ENCODE measurements at regions of chrX and their contacts with region 1.

Region 1: GRCh38 chrX:71301195-71301924 is at the start of gene ITGB1BP2:
- DNase-seq: no peak
- H3K4me3 ChIP-seq: no peak within 1 kb of the TSS
- H3K27ac ChIP-seq: no peak within 1 kb of the TSS
- H3K4me1 ChIP-seq: no peaks in the 10 kb centered on the region
- H3K27me3 ChIP-seq: no peaks in the 10 kb centered on the region
- CTCF ChIP-seq: no peak
- total RNA-seq, gene ITGB1BP2: 5.2 and 5.4 TPM in 2 replicates

Region 2: GRCh38 chrX:70313503-70313902 is 987.9 kb before region 1 on chrX:
- CTCF ChIA-PET with region 1: no interaction called
- POLR2A ChIA-PET with region 1: interaction called, 12 read pairs
- intact Hi-C with region 1: no loop called
- DNase-seq: no peak
- H3K4me3 ChIP-seq: no peak overlapping the region
- H3K27ac ChIP-seq: no peak overlapping the region
- H3K4me1 ChIP-seq: no peaks in the 10 kb centered on the region
- H3K27me3 ChIP-seq: no peaks in the 10 kb centered on the region
- CTCF ChIP-seq: no peak

Region 3: DNA sequence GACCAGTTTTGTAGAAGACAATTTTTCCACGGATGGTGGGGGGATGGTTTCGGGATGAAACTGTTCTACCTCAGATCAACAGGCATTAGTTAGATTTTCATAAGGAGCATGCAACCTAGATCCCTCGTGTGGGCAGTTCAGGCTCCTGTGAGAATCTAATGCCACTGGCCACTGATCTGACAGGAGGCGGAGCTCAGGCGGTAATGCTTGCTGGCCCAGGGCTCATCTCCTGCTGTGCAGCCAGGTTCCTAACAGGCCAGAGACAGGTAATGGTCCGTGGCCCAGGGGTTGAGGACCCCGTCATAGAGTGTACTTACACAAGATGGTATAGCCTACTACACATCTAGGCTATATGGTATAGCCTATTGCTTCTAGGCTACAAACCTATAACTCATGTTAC is 399.9 kb before region 1 on chrX:
- CTCF ChIA-PET with region 1: no interaction called
- POLR2A ChIA-PET with region 1: no interaction called
- intact Hi-C with region 1: no loop called
- DNase-seq: no peak
- H3K4me3 ChIP-seq: no peak overlapping the region
- H3K27ac ChIP-seq: no peak overlapping the region
- H3K4me1 ChIP-seq: no peaks in the 10 kb centered on the region
- H3K27me3 ChIP-seq: no peaks in the 10 kb centered on the region
- CTCF ChIP-seq: no peak

Measured in PC-9 (cell line).